HepG2 (cell line): ENCODE measurements at regions of chr3 and their contacts with region 1.

Region 1: GRCh38 chr3:126679318-126679751 is 24.4 kb upstream of the TXNRD3 start:
- DNase-seq: peak; percentile 59
- ATAC-seq: peak; percentile 97
- H3K4me3 ChIP-seq: peak overlapping the region in 1 of 3 experiments; percentile 53; a peak in 1 of 6 replicates
- H3K27ac ChIP-seq: no peak overlapping the region
- H3K4me1 ChIP-seq: peaks cover 17% of the 10 kb centered on the region
- H3K27me3 ChIP-seq: peaks cover 6 to 57% of the 10 kb centered on the region in 2 experiments; a peak in 4 of 5 replicates
- CTCF ChIP-seq: peak; percentile 97
- EP300 ChIP-seq: no peak
- POLR2A ChIP-seq: no peak
- RAD21 ChIP-seq: peak; percentile 89

Region 2: DNA sequence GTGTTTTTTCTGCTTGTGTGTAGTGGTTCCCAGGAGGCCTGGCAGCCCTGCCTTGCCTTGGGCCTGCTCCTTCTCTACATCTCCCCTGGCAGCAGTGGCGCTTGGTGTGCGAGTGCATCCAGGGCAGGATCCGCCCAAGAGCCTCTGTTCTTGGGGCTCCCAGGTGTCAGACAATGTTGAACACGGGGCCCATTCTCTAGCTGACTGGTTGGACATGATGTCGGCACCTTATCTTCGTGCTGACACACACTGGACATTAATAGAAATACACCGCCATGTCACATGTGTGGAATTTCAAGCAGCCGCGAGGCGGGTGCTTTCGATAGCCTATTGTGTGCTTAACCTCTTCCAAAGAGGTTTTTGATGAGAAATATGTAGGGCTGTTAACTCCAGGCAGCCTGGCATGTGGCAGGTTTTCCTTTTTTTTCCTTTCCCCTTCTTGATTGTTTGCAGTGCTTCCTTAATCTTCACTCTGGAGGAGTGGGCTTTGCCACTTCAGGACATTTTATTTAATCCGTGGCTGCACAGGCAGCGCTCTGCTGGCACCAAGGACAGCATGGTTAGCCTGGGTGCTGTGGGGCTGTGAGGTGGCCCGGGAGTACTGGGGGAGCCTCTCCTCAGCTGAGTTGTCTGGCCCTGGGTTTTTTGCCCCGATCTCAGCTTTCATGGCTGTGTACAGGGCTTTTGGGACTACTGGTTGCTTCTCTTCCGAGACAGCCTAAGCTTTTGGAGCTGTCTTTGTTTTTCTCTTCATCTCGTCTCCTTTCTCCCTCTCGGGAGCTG is 67.3 kb after region 1 on chr3:
- CTCF ChIA-PET with region 1: interaction called, 9 read pairs
- POLR2A ChIA-PET with region 1: no interaction called
- in situ Hi-C with region 1: no loop called
- intact Hi-C with region 1: loop called (anchors 1 kb)
- DNase-seq: peak; percentile 84
- ATAC-seq: peak; percentile 79
- H3K4me3 ChIP-seq: no peak overlapping the region
- H3K27ac ChIP-seq: no peak overlapping the region
- H3K4me1 ChIP-seq: peaks cover 17% of the 10 kb centered on the region
- H3K27me3 ChIP-seq: no peaks in the 10 kb centered on the region; a peak in 1 of 5 replicates
- CTCF ChIP-seq: peak; percentile 23
- EP300 ChIP-seq: no peak
- POLR2A ChIP-seq: no peak
- RAD21 ChIP-seq: no peak

Region 3: DNA sequence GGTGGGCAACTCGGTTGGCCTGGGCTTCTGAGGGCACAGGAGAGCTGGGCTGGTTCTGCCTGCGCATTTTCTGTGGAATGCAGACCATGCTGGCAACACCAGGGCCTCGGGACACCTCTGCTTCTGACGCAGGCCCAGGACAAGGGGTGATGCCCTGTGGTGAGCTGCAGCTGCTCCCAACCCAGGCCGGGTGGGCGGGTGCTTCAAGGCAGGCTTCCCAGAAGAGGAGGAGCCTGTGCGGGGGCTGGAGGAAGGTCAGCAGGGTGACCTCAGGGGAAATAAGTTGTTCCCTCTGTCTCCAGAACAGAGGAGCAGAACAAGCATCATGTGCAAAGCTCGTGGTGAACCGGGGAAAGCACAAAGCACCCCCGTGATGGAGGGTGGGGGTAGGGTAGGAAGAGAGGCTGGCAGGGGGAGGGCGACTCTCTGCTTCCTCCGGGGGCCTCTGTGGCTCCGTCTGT is 292.6 kb after region 1 on chr3:
- CTCF ChIA-PET with region 1: no interaction called
- POLR2A ChIA-PET with region 1: no interaction called
- in situ Hi-C with region 1: loop called (anchors 10 kb)
- intact Hi-C with region 1: no loop called
- DNase-seq: no peak
- ATAC-seq: peak; percentile 25; the same call in 2 of the 3 replicates
- H3K4me3 ChIP-seq: peak overlapping the region in 1 of 3 experiments; percentile 33; a peak in 1 of 6 replicates
- H3K27ac ChIP-seq: no peak overlapping the region
- H3K4me1 ChIP-seq: peaks cover 12% of the 10 kb centered on the region; the same call in 1 of the 2 replicates
- H3K27me3 ChIP-seq: peaks cover 1 to 6% of the 10 kb centered on the region in 2 experiments; a peak in 3 of 5 replicates
- CTCF ChIP-seq: no peak
- EP300 ChIP-seq: no peak
- POLR2A ChIP-seq: no peak
- RAD21 ChIP-seq: no peak

Region 4: GRCh38 chr3:126982471-126983175 is 303.3 kb after region 1 on chr3 and contains the start of gene PLXNA1:
- CTCF ChIA-PET with region 1: no interaction called
- POLR2A ChIA-PET with region 1: no interaction called
- in situ Hi-C with region 1: loop called (anchors 10 kb)
- intact Hi-C with region 1: loop called (anchors 10 kb)
- DNase-seq: peak; percentile 44
- ATAC-seq: peak; percentile 61
- H3K4me3 ChIP-seq: peak within 1 kb of the TSS; percentile 59 to 92 (median 81); a peak in 5 of 6 replicates
- H3K27ac ChIP-seq: peak within 1 kb of the TSS; percentile 55
- H3K4me1 ChIP-seq: peaks cover 39% of the 10 kb centered on the region
- H3K27me3 ChIP-seq: peaks cover 2 to 16% of the 10 kb centered on the region in 2 experiments; a peak in 3 of 5 replicates
- CTCF ChIP-seq: peak; percentile 91
- EP300 ChIP-seq: no peak
- POLR2A ChIP-seq: no peak
- RAD21 ChIP-seq: peak; percentile 81
- total RNA-seq, gene PLXNA1: 8.5 and 16.6 TPM in 2 replicates

Region 5: GRCh38 chr3:127172781-127173515 is 493.6 kb after region 1 on chr3:
- CTCF ChIA-PET with region 1: no interaction called
- POLR2A ChIA-PET with region 1: no interaction called
- in situ Hi-C with region 1: no loop called
- intact Hi-C with region 1: loop called (anchors 2 kb)
- DNase-seq: no peak
- ATAC-seq: no peak
- H3K4me3 ChIP-seq: no peak overlapping the region
- H3K27ac ChIP-seq: no peak overlapping the region
- H3K4me1 ChIP-seq: no peaks in the 10 kb centered on the region
- H3K27me3 ChIP-seq: peaks cover 2 to 25% of the 10 kb centered on the region in 2 experiments; a peak in 3 of 5 replicates
- CTCF ChIP-seq: no peak
- EP300 ChIP-seq: no peak
- POLR2A ChIP-seq: no peak
- RAD21 ChIP-seq: no peak

Region 6: GRCh38 chr3:127455541-127456450 is 776.5 kb after region 1 on chr3:
- CTCF ChIA-PET with region 1: interaction called, 6 read pairs
- POLR2A ChIA-PET with region 1: no interaction called
- in situ Hi-C with region 1: loop called (anchors 5 kb)
- intact Hi-C with region 1: loop called (anchors 5 kb)
- DNase-seq: peak; percentile 41
- ATAC-seq: peak; percentile 99
- H3K4me3 ChIP-seq: peak overlapping the region in 1 of 3 experiments; percentile 32; a peak in 1 of 6 replicates
- H3K27ac ChIP-seq: no peak overlapping the region
- H3K4me1 ChIP-seq: no peaks in the 10 kb centered on the region
- H3K27me3 ChIP-seq: peaks cover 2 to 66% of the 10 kb centered on the region in 2 experiments; a peak in 4 of 5 replicates
- CTCF ChIP-seq: peak; percentile 88
- EP300 ChIP-seq: no peak
- POLR2A ChIP-seq: no peak
- RAD21 ChIP-seq: peak; percentile 99

Region 7: DNA sequence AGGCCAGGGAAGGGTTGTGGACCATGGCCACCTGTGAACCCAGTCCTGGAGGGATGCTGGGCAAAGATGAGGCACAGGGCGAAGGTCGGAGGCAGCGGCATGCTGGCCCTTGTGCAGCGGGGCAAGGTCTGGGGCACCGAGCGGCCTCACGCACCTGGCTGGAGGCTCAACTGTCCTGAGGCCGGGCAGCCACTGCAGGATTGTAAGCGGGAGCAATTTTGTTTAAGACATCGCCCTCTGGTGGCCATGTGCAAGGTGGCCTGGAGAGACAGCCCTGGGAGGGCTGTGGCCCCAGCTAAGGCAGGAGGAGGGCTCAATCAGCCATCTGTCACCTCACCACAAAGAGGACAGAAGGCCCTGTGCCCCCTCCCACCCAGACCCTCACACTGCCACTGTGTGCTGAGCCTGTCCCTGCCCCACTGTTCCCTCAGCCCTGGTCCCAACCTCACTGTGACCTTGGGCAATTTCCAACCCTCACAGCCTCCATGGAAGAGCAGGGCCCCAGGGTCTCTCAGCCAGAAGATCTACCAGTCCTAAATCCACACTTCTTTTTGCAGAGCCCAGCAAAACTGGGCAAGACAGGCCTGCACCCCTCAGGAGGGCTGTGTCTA is 865.0 kb after region 1 on chr3:
- CTCF ChIA-PET with region 1: no interaction called
- POLR2A ChIA-PET with region 1: no interaction called
- in situ Hi-C with region 1: no loop called
- intact Hi-C with region 1: loop called (anchors 5 kb)
- DNase-seq: peak; percentile 70
- ATAC-seq: peak; percentile 86
- H3K4me3 ChIP-seq: peak overlapping the region in 1 of 3 experiments; percentile 12; a peak in 1 of 6 replicates
- H3K27ac ChIP-seq: no peak overlapping the region
- H3K4me1 ChIP-seq: peaks cover 52% of the 10 kb centered on the region
- H3K27me3 ChIP-seq: peaks cover 4 to 15% of the 10 kb centered on the region in 2 experiments; a peak in 3 of 5 replicates
- CTCF ChIP-seq: peak; percentile 91
- EP300 ChIP-seq: no peak
- POLR2A ChIP-seq: no peak
- RAD21 ChIP-seq: peak; percentile 57